ENCODE measurements at regions of chr12 and their contacts with region 1.

Region 1: GRCh38 chr12:94101738-94102660 is 46.4 kb upstream of the PLXNC1 start:
- DNase-seq: peak; percentile 86 to 90 (median 87)
- H3K4me3 ChIP-seq: peak overlapping the region; percentile 35 to 81 (median 69)
- H3K27ac ChIP-seq: no peak overlapping the region
- H3K4me1 ChIP-seq: peaks cover 6 to 36% (median 34%) of the 10 kb centered on the region in 4 experiments
- H3K27me3 ChIP-seq: no peaks in the 10 kb centered on the region

Region 2: DNA sequence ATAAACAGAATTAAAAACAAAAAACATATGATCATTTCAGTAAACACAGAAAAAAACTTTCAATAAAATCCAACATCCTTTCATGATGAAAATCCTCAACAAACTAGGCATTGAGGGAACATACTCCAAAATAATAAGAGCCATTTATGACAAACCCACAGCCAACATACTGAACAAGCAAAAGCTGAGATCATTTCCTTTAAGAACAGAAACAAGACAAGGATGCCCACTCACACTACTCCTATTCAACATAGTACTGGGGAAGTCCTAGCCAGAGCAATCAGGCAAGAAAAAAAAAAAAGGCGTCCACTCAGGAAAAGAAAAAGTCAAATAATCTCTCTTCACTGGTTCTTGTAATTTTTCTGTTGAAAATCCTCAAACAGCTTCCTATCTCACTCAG is 604.5 kb before region 1 on chr12:
- CTCF ChIA-PET with region 1: interaction called, 169 read pairs
- POLR2A ChIA-PET with region 1: interaction called, 3 read pairs
- DNase-seq: no peak
- H3K4me3 ChIP-seq: no peak overlapping the region
- H3K27ac ChIP-seq: no peak overlapping the region
- H3K4me1 ChIP-seq: peaks cover 0 to 7% (median 3%) of the 10 kb centered on the region in 4 experiments
- H3K27me3 ChIP-seq: no peaks in the 10 kb centered on the region

Region 3: GRCh38 chr12:93526786-93527428 is 575.1 kb before region 1 on chr12:
- CTCF ChIA-PET with region 1: interaction called, 52 read pairs
- POLR2A ChIA-PET with region 1: no interaction called
- DNase-seq: no peak
- H3K4me3 ChIP-seq: no peak overlapping the region
- H3K27ac ChIP-seq: no peak overlapping the region
- H3K4me1 ChIP-seq: peaks cover 5 to 26% (median 15%) of the 10 kb centered on the region in 4 experiments
- H3K27me3 ChIP-seq: no peaks in the 10 kb centered on the region

Region 4: GRCh38 chr12:93742110-93742934 is 359.7 kb before region 1 on chr12:
- CTCF ChIA-PET with region 1: interaction called, 29 read pairs
- POLR2A ChIA-PET with region 1: interaction called, 3 read pairs
- DNase-seq: peak; percentile 81 to 86 (median 83)
- H3K4me3 ChIP-seq: peak overlapping the region; percentile 44 to 98 (median 83)
- H3K27ac ChIP-seq: peak overlapping the region; percentile 87 to 92
- H3K4me1 ChIP-seq: peaks cover 16 to 68% (median 45%) of the 10 kb centered on the region in 4 experiments
- H3K27me3 ChIP-seq: no peaks in the 10 kb centered on the region

Region 5: GRCh38 chr12:93894391-93895088 is 207.5 kb before region 1 on chr12:
- CTCF ChIA-PET with region 1: interaction called, 16 read pairs
- POLR2A ChIA-PET with region 1: no interaction called
- DNase-seq: peak; percentile 14 to 67 (median 51)
- H3K4me3 ChIP-seq: peak overlapping the region in 2 of 7 experiments; percentile 8 to 37
- H3K27ac ChIP-seq: no peak overlapping the region
- H3K4me1 ChIP-seq: peaks cover 0 to 29% (median 18%) of the 10 kb centered on the region in 4 experiments
- H3K27me3 ChIP-seq: no peaks in the 10 kb centered on the region

Region 6: GRCh38 chr12:94080348-94081009 is 21.5 kb before region 1 on chr12:
- CTCF ChIA-PET with region 1: interaction called, 80 read pairs
- POLR2A ChIA-PET with region 1: interaction called, 3 read pairs
- DNase-seq: no peak
- H3K4me3 ChIP-seq: no peak overlapping the region
- H3K27ac ChIP-seq: no peak overlapping the region
- H3K4me1 ChIP-seq: peaks cover 2 to 32% (median 19%) of the 10 kb centered on the region in 4 experiments
- H3K27me3 ChIP-seq: no peaks in the 10 kb centered on the region

Region 7: DNA sequence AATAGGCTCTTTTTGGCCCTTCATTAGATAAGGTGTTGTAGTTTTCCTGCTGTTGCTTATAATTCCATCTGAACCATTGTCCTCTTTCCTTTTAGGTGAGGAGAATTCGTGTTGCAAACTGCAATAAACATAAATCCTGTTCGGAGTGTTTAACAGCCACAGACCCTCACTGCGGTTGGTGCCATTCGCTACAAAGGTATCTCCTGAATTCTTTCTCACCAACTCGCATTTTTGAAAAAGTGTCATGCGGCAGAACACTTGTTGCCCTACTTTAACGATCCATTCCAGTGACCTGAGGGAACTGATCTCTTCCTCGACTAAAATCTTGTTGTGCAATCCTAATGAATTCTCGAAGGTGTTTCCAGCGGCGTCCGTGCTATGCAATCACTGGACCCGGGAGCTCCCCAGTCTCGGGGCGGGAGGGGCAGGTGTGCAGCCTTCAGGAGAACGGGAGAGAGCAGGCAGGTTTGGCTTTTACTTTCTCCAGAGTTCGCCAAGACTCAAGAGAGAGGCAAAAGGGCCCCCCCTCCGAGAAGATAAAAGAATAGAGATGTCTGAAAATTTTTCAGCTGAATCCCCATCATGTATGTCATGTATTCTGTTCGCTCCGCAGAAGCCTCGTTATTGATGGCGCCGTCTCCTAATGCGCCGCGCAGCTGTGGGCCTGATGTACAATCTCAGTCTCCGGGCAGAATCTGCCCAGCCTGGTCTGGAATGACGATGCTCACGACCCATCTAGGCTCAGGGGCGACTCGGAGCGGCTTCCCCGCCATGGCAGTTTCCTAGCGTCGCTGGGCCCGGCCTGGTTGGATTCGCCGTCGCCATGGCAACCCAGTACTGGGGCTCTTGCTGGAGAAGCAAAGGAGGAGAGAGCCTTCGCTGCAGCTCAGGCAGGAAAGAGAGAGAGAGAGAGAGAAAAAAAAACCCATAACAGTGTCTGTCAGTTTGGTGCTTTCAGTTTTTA is 84.6 kb after region 1 on chr12:
- CTCF ChIA-PET with region 1: no interaction called
- POLR2A ChIA-PET with region 1: no interaction called
- DNase-seq: no peak
- H3K4me3 ChIP-seq: no peak overlapping the region
- H3K27ac ChIP-seq: no peak overlapping the region
- H3K4me1 ChIP-seq: peaks cover 0 to 25% (median 18%) of the 10 kb centered on the region in 4 experiments
- H3K27me3 ChIP-seq: no peaks in the 10 kb centered on the region